Activated CD4-positive, alpha-beta T cell treated with anti-CD3 and anti-CD28 coated beads, Interleukin-2, amount 10 ng/mL, durations not matched to agents 24 days and 14 days (primary cell): ENCODE measurements at regions of chr3 and their contacts with region 1.

Region 1: DNA sequence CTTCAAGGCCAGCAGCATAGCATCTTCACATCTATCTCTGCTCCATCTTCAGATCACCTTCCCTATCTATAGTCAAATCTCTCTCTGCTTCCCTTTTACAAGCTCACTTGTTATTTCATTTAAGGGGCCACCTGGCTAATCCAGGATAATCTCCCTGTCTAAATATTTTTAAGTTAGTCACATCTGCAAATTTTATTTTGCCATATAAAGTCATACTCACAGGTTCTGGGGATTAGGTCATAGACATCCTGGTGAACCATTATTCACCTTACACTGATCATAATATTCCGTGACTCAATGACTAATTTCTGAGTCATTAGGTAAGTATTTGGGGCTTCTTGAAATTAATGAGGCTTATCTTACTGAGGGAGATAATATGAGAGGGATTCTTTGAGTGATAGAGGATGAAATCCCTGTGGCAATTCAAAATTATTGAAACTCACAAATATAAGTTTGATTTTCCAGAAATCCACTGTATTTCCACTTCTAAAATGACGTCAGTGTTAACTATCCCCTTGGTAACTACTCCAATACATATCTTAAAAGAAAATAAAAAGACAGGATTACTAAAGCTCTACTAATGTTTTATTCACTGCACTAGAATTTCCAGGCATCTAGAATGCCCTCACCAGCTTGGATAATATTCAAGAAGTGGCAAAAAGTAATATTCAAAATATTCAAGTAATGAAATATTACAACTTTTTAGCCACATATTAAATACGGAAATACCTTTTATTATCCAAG is 93.7 kb upstream of the RBMS3 start:
- DNase-seq: no peak
- H3K4me3 Mint-ChIP-seq: no peak overlapping the region
- H3K27ac Mint-ChIP-seq: peak overlapping the region; percentile 73
- H3K4me1 Mint-ChIP-seq: peaks cover 20% of the 10 kb centered on the region
- H3K27me3 Mint-ChIP-seq: no peaks in the 10 kb centered on the region

Region 2: DNA sequence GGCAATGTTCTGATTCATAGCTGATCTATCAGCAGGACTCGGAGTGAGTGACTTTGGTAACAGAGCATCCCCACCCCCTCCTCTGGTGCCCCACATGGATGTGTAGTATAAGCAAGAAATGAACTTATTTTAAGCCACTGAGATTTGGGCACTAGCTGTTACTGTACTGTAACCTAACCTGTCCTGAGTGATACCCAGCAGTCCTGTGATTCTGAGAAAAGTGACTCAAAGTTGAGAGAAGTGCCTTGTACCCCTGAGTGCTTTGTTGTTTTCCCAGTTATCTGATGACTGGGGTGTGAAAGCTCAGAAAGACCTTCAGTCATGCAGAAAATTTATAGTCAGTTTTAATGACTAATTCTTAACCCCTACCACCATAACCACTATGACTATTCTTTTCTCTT is 346.2 kb before region 1 on chr3:
- intact Hi-C with region 1: loop called (anchors 1 kb)
- DNase-seq: peak; percentile 61
- H3K4me3 Mint-ChIP-seq: peak overlapping the region; percentile 24
- H3K27ac Mint-ChIP-seq: peak overlapping the region; percentile 76
- H3K4me1 Mint-ChIP-seq: peaks cover 19% of the 10 kb centered on the region
- H3K27me3 Mint-ChIP-seq: no peaks in the 10 kb centered on the region

Region 3: DNA sequence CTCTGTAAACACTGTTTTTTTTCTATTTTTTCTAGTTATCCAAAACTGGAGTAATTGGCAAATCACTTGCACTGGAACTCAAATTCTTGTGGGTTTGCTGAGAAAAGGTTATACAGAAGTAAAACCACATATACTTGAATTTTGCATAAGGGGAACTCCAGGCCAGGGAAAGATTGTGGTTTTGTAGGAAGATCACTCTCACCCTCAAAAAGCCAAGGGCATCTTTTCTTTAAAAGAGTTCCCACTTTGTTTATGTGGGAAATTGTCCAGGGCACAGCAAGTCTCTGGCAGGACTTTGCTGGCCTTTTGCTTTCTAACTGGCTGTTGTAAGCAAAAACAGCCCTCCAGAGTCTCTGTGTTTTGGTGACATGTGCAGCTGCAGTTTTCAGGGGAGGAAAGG is 246.6 kb before region 1 on chr3:
- intact Hi-C with region 1: loop called (anchors 1 kb)
- DNase-seq: peak; percentile 64
- H3K4me3 Mint-ChIP-seq: peak overlapping the region; percentile 72
- H3K27ac Mint-ChIP-seq: peak overlapping the region; percentile 77
- H3K4me1 Mint-ChIP-seq: peaks cover 32% of the 10 kb centered on the region
- H3K27me3 Mint-ChIP-seq: no peaks in the 10 kb centered on the region

Region 4: DNA sequence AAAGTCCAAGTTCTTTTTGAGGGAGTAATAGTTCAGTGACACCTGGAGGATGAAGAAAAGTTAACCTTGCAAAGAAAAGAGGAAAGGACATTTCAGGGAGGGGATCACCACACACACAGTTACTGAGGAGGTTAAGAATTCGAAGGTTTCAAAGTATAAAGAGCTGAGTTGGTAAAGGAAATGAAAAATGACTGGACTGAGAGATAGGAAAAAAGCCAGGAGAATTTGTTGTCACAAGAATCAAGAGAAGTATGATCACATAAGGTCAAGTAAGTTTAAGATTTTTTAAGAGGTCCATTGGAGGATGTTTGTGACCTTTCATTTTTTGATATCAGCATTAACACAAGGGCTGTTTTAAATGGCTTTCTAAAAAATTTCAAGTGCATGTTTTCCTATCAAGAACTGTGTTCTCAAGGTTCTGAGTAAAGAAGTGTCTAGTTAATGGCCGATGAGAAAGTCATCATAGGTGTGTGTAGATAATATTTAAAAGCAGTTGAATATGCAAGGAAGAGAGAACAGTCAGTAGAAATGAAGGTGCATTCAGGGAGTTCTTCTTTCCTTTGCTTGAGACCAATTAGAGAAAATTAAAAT is 95.5 kb before region 1 on chr3:
- intact Hi-C with region 1: loop called (anchors 1 kb)
- DNase-seq: no peak
- H3K4me3 Mint-ChIP-seq: no peak overlapping the region
- H3K27ac Mint-ChIP-seq: peak overlapping the region; percentile 52
- H3K4me1 Mint-ChIP-seq: peaks cover 2% of the 10 kb centered on the region
- H3K27me3 Mint-ChIP-seq: no peaks in the 10 kb centered on the region

Region 5: DNA sequence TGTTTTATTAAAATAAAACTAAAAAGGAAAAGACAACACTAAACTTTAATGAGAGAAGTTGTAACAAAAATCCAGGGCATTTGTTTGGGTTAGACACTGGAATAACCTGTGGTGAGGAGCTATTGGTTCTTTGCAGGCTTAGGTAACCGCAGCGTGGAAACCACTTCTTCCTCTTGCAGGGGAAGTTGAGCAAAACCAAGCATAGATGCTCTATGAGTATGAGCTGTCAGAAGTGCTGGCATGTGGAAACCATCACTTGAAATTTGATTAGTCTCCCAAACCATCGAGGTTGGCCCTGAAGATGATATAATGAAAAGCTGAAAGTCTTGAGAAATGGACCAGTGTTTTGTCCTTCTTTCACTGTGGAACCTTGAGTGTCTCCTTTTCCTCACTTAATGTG is 33.3 kb before region 1 on chr3:
- intact Hi-C with region 1: loop called (anchors 2 kb)
- DNase-seq: peak; percentile 86
- H3K4me3 Mint-ChIP-seq: no peak overlapping the region
- H3K27ac Mint-ChIP-seq: no peak overlapping the region
- H3K4me1 Mint-ChIP-seq: peaks cover 13% of the 10 kb centered on the region
- H3K27me3 Mint-ChIP-seq: peaks cover 16% of the 10 kb centered on the region

Region 6: GRCh38 chr3:29683018-29683993 is 496.2 kb after region 1 on chr3:
- intact Hi-C with region 1: loop called (anchors 10 kb)
- DNase-seq: no peak
- H3K4me3 Mint-ChIP-seq: no peak overlapping the region
- H3K27ac Mint-ChIP-seq: no peak overlapping the region
- H3K4me1 Mint-ChIP-seq: peaks cover 9% of the 10 kb centered on the region
- H3K27me3 Mint-ChIP-seq: peaks cover 6% of the 10 kb centered on the region